ENCODE measurements at regions of chr17 and their contacts with region 1.

Region 1: DNA sequence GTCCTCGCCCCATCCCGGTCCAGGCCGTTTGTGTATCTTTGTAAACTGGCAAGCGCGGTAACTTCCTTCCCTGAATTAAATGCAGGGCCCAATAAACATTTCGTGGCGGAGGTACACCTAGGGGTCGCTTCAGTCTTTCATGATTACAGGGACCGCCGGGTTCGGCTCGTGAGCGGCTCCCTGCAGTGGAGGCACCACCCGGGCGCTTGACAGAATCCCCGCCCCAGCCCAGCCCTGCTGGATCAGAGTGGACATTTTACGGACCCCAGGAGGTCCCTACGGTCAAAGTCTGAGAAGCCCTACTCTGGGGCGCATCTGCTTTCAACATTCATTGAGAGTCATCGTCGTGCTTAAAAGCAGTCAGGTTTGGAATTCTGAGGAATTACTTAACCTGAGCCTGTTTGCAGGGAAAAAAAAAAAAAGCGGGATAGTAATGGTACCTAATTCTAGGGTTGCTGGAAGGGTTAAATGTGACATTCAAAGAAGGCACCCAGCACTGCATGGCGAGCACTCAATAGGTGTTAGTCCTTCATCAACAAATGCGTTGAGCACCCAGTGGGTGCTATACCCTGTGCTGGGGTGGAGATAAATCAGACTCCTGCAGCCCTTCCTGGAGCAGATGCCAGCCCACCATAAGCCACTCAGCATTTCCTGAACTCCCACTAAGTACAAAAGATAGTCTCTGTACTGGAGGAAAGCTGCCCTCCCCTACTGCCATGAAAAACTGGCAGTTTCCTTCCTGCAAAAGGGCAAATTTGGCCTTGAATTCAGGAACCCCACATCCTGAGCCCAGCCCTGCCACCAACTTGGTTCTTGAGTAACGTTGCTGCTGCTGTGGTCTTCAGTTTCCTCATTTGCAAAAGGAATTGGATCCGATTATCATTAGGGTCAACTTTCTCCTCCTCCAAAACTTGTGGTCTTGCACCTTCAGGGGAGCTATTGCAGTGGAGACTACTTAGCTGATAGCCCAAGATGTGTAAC is 658 bp upstream of the DUSP3 start:
- DNase-seq: peak in 1 of 2 donors; percentile 88
- H3K4me3 ChIP-seq: peak overlapping the region; percentile 90 to 96
- H3K27ac ChIP-seq: peak overlapping the region; percentile 99
- H3K4me1 ChIP-seq: peaks cover 34% of the 10 kb centered on the region
- H3K27me3 ChIP-seq: no peaks in the 10 kb centered on the region
- CTCF ChIP-seq: peak in 1 of 3 experiments; percentile 10
- POLR2A ChIP-seq: no peak

Region 2: GRCh38 chr17:43846221-43846712 is 66.8 kb after region 1 on chr17:
- intact Hi-C with region 1: loop called (anchors 10 kb)
- DNase-seq: no peak
- H3K4me3 ChIP-seq: no peak overlapping the region
- H3K27ac ChIP-seq: no peak overlapping the region
- H3K4me1 ChIP-seq: no peaks in the 10 kb centered on the region
- H3K27me3 ChIP-seq: no peaks in the 10 kb centered on the region
- CTCF ChIP-seq: peak; percentile 91 to 96 (median 96)
- POLR2A ChIP-seq: no peak

Measured in vagina (tissue), 2 donors.